ENCODE measurements at regions of chr6 and their contacts with region 1.

Region 1: DNA sequence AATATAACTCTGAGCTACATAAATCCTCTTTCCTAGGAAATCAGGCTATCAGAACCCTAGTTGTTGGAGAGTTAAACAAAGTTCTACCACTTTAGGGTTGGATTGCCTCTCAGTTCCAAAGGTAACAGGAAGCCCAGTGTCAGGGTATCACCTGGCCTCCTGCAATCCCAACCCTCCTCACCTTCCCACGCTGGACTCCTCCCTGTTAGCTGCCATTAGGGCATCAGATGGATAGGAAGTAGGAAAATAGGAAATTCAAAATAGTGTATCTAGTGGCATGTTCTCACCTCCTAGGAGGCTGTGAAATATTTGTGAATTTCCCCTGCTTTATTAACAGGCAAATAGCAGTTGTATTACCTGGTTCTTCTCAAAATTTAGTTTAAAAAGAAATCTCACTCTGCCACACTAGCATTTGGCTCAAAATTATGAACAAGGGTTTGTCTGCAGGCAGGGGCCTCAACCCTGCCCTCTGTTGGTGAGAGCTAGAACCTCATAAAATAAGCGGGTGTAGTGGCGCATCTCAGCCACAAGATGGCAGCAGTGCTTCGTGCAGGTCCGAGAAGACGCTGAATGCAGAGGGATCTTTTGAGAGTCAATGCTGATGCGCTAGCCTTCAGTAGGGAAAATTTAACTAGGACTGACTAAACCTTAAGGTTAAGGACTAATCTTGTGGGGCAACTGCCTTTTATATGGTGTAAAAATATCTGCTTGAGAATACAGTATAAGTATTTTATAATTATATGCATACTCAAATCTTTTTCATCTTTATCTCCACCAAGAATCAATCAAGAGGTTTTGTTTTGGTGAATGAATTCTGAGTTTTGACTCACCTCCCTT is 209.8 kb upstream of the KCNQ5 start:
- DNase-seq: peak; percentile 67
- H3K4me3 ChIP-seq: peak overlapping the region in 1 of 2 experiments; percentile 22; a peak in 1 of 4 replicates
- H3K27ac ChIP-seq: no peak overlapping the region
- H3K4me1 ChIP-seq: peaks cover 0 to 5% of the 10 kb centered on the region in 2 experiments; a peak in 3 of 4 replicates
- H3K27me3 ChIP-seq: no peaks in the 10 kb centered on the region
- CTCF ChIP-seq: peak; percentile 100
- EP300 ChIP-seq: no peak
- RAD21 ChIP-seq: peak; percentile 100

Region 2: GRCh38 chr6:72390548-72390947 is 21.5 kb before region 1 on chr6:
- CTCF ChIA-PET with region 1: interaction called, 14 read pairs
- POLR2A ChIA-PET with region 1: no interaction called
- DNase-seq: no peak
- H3K4me3 ChIP-seq: no peak overlapping the region
- H3K27ac ChIP-seq: no peak overlapping the region
- H3K4me1 ChIP-seq: no peaks in the 10 kb centered on the region; a peak in 1 of 4 replicates
- H3K27me3 ChIP-seq: no peaks in the 10 kb centered on the region
- CTCF ChIP-seq: no peak
- EP300 ChIP-seq: no peak
- RAD21 ChIP-seq: no peak

Region 3: DNA sequence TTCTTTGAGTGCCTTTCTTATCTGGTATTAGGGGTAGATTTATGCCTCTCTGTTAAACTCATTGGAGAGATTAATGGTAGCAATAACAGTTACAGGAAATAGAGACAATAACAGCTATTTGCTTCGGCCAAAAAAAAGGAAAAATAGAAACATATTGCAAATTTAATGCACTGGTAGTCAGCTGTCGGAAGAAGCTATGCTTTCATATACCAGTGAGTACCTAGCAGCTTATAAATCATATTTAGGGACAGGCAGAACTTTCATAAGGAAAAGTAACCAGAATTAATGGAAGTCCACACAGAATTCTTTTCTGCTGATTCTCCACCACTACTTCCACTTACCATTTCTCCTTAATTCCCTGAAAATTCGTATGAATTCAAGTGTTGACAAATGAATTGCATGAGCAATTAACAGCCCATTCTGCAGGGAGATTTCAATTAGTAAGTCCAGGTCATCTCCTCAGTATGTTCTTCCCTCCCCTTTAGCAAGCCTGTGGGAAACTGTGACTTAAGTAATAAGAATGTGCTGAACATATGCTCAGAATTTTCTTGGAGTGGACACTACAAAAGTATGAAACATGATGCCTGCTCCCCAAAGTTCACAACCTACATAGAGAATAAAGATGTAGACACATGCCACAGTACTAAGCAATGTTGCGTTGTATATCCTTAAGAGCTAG is 13.1 kb after region 1 on chr6:
- CTCF ChIA-PET with region 1: interaction called, 54 read pairs
- POLR2A ChIA-PET with region 1: no interaction called
- DNase-seq: no peak
- H3K4me3 ChIP-seq: no peak overlapping the region
- H3K27ac ChIP-seq: peak overlapping the region; percentile 52 to 71
- H3K4me1 ChIP-seq: peaks cover 0 to 42% of the 10 kb centered on the region in 2 experiments; a peak in 2 of 4 replicates
- H3K27me3 ChIP-seq: no peaks in the 10 kb centered on the region
- CTCF ChIP-seq: no peak
- EP300 ChIP-seq: peak in 1 of 2 experiments; percentile 79; a peak in 1 of 4 replicates
- RAD21 ChIP-seq: no peak

Region 4: DNA sequence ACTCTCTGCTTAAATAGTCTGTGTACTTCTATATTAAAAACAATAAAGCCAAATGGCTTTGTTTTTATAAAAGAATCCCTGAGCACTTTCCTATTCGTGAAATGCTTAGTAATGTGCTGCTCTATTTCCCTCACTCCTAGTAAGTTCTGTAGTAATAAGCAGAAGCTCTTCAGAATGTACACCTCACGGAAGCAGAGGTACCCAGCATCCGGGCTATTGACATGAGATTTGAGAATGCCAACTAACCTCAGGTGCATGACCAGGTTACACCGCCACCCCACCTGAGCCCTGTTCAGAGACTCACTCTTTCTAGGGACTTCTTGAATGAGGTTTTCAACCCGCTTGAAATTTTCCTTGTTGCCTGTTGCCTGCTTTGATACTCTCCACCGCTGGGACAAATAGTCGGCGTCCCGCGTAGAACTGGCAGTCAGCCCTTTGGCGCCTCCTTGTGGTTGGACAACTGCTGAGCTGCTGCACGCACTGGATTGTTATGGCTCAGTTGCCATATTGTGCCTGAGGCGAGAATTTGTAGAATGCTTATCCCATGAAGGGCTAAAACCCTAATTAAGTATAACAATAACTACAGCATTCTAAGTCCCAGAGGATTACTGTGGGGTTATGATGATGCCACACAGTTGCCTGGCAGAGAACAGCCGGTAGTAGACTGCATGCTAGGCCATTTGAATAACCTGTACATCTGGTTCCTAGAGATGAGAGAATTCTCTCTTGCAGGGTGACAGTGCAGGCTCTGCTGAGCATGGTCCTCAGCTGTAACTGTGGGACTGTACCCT is 717.8 kb after region 1 on chr6:
- CTCF ChIA-PET with region 1: interaction called, 39 read pairs
- POLR2A ChIA-PET with region 1: no interaction called
- DNase-seq: peak; percentile 52
- H3K4me3 ChIP-seq: peak overlapping the region in 1 of 2 experiments; percentile 50; a peak in 1 of 4 replicates
- H3K27ac ChIP-seq: no peak overlapping the region
- H3K4me1 ChIP-seq: peaks cover 0 to 7% of the 10 kb centered on the region in 2 experiments; a peak in 1 of 4 replicates
- H3K27me3 ChIP-seq: no peaks in the 10 kb centered on the region
- CTCF ChIP-seq: peak; percentile 77
- EP300 ChIP-seq: no peak
- RAD21 ChIP-seq: peak; percentile 86

Region 5: DNA sequence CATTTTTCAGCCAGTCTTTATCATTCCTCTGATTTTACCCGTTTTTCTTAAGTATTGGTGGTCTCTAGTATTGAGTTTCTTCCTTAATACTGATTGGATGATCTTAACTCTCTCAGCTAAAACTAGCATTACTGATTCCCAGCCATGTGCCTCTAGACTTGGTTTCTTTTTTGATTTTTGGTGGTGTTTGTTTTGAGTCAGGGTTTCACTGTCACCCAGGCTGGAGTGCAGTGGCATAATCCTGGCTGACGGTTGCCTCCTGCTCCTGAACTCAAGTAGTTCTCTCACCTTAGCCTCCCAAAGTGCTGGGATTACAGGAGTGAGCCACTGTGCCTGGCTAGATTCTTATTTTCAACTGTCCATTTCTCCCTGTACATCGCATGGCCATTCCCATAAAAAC is 917.1 kb after region 1 on chr6:
- CTCF ChIA-PET with region 1: interaction called, 30 read pairs
- POLR2A ChIA-PET with region 1: no interaction called
- DNase-seq: no peak
- H3K4me3 ChIP-seq: no peak overlapping the region
- H3K27ac ChIP-seq: no peak overlapping the region
- H3K4me1 ChIP-seq: no peaks in the 10 kb centered on the region
- H3K27me3 ChIP-seq: no peaks in the 10 kb centered on the region; the same call in 1 of the 2 replicates
- CTCF ChIP-seq: no peak
- EP300 ChIP-seq: no peak
- RAD21 ChIP-seq: no peak

Measured in SK-N-SH (cell line).